Heart left ventricle (tissue), 16 donors: ENCODE measurements at regions of chr4 and their contacts with region 1.

Region 1: DNA sequence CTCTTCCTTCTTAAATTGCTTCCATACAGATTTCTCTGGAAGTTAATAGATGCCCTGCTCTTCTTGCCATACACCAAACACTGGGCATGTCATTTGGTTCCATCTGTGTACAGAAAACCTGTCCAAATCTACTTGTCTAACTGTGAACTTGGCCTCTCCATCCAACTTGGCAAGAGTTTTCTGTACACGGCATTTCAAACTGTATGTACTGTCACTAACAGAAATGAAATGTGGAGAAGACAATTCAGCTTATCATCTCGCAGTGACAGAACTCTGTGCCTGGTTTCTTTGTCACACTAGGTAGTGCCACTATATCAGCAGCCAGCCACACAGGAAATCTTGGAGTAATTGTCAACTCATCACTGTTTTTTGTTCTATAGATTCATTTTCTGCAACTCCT is 58.2 kb downstream of the CXXC4 start:
- DNase-seq: no peak
- ATAC-seq: peak; percentile 65 to 87 (median 78)
- H3K4me3 ChIP-seq: no peak overlapping the region
- H3K27ac ChIP-seq: no peak overlapping the region
- H3K4me1 ChIP-seq: peaks cover 0 to 3% (median 0%) of the 10 kb centered on the region in 12 donors
- H3K27me3 ChIP-seq: no peaks in the 10 kb centered on the region
- CTCF ChIP-seq: no peak
- POLR2A ChIP-seq: no peak

Region 2: DNA sequence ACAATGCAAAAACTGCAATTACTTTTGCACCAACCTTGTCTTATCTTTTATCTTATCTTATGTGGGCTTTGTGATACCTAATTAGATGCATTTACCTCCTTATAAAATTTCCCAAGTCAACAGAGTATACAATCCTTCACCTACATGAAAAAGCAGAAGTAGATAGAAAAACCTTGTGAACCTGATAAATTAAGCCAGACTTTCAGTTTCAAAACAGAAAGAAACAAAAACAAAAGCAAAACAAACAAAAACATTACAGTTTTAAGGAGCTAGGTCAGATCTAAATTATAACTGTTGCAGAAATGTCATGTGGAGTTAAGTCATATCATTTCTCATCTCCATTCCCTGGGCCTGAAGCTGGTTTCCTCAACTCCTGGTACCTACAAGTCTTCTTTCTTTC is 83.0 kb after region 1 on chr4:
- intact Hi-C with region 1: no loop called
- DNase-seq: no peak
- ATAC-seq: no peak
- H3K4me3 ChIP-seq: no peak overlapping the region
- H3K27ac ChIP-seq: no peak overlapping the region
- H3K4me1 ChIP-seq: no peaks in the 10 kb centered on the region
- H3K27me3 ChIP-seq: no peaks in the 10 kb centered on the region
- CTCF ChIP-seq: no peak
- POLR2A ChIP-seq: no peak

Region 3: DNA sequence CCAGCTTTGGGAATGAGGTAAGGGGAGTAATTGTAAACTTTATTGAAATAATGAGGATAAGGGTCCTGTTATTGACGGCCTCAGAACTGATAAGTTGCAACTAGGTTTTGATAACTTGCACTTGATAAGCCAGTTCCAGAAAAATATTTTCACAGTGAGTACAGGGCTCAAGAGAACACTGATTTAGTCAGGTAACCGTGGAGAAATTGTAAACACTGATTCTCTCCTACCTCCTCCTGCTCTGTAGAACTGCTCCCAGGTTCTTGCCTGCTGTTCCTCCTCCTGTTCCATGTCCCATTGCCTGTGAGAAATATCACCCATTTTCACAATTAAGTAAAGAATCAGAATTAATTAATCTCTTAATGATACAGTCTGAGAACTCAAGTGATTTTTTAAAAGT is 113.2 kb after region 1 on chr4:
- intact Hi-C with region 1: loop called in 1 of 10 experiments (anchors 10 kb)
- DNase-seq: no peak
- ATAC-seq: no peak
- H3K4me3 ChIP-seq: no peak overlapping the region
- H3K27ac ChIP-seq: no peak overlapping the region
- H3K4me1 ChIP-seq: peaks cover 0 to 3% (median 0%) of the 10 kb centered on the region in 12 donors
- H3K27me3 ChIP-seq: no peaks in the 10 kb centered on the region
- CTCF ChIP-seq: no peak
- POLR2A ChIP-seq: no peak